ENCODE measurements at regions of chr12 and their contacts with region 1.

Region 1: DNA sequence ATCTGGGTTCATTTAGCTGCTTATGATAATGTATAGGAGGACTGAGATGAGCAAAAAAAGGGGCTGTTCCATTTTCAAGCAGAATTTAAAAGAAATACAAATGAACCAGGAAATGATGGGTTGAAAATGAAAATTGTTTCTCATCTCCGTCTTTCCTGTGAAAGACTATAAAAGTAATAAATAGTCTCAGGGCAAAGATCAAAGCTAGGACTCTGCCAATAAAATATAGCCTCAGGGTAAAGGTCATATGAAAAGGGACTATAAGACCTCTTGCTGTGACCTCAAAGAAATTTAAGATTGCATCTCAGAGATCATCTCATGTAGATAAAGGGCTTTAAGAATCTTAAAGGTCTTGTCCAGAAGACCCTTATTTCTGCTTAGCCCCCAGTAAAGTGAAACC is 477.9 kb downstream of the BTG1 start:
- DNase-seq: no peak
- ATAC-seq: no peak
- H3K4me3 ChIP-seq: no peak overlapping the region
- H3K27ac ChIP-seq: no peak overlapping the region
- H3K4me1 ChIP-seq: no peaks in the 10 kb centered on the region
- H3K27me3 ChIP-seq: no peaks in the 10 kb centered on the region
- CTCF ChIP-seq: no peak

Region 2: DNA sequence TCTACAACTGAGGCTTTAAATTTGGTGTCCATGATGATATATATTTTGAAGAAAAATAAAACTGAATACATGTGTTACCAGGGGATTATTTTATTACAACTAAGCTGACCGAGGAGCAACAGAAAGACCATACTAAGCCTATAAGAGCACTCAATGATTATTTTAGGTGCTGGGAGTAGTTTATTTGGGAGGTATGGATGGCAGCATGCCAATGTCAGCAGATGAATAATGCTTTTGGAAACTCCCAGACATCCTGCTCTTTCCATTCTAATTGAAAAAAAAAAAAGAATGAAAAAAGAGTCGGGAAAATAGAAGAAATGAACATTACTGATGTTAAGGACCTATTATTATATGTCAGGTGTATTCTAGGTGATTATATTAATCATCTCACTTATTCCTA is 36.7 kb after region 1 on chr12:
- intact Hi-C with region 1: loop called in 1 of 2 experiments (anchors 5 kb)
- DNase-seq: no peak
- ATAC-seq: no peak
- H3K4me3 ChIP-seq: no peak overlapping the region
- H3K27ac ChIP-seq: no peak overlapping the region
- H3K4me1 ChIP-seq: no peaks in the 10 kb centered on the region
- H3K27me3 ChIP-seq: no peaks in the 10 kb centered on the region
- CTCF ChIP-seq: no peak